ENCODE measurements at regions of chr4 and their contacts with region 1.

Region 1: DNA sequence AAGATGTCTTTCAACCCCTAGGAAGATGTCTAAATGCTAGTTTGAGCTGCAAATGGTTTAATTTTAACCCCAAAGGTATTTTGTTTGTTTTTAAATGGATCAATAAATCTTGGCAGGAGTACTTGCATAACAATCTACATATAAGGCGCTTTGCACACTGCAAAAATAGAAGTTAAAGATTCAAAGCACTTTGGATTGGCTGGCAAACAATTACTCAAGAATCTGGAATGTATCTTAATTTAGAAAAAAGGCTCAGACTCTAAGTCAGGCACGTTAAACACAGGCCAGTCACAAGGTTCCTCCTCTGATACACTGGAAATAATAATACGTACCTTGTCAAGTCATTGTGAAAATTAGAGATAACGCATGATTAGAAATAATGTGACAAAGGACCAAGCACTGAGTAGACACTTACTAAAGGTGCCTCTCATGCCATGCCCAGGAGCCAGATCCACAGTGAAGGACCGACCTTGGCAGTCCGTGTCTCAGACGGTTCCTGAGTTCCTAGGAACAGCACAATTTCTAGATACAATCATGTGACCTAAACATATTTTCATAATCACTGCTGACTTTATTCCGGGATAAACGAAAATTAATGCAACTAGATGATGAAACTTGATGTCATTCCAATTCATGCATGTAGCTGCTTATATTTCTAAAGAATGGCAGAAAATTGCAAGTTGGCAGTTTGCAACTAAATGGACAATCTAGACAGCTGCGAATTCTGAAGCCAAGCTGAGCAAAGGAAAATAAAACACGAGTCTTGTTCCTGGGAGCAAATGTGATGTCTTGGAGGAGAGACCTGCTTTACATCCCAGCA is 49.6 kb downstream of the PROM1 start:
- DNase-seq: no peak
- H3K4me3 ChIP-seq: no peak overlapping the region
- H3K27ac ChIP-seq: no peak overlapping the region
- H3K4me1 ChIP-seq: no peaks in the 10 kb centered on the region
- H3K27me3 ChIP-seq: no peaks in the 10 kb centered on the region
- CTCF ChIP-seq: no peak
- POLR2A ChIP-seq: no peak

Region 2: DNA sequence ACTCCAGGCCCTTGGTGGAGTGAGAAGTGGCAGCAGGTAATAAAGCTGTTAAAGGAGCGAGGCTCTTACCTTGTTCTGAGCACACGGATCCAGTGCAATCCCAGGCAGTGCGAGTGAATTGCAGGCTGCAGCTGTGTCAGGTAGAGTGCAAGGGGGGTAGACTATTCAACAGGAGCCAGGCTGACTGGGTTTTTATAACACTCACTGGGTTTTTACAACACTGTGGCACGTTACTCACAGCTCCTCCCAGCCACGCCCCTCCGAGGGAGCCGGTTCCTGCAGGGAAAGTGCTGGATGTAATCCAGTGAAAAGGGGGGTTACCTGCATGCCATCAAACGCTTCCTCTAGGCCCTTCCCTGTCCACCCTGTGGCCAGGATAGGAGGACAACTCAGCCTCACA is 96.0 kb before region 1 on chr4:
- intact Hi-C with region 1: no loop called
- DNase-seq: no peak
- H3K4me3 ChIP-seq: no peak overlapping the region
- H3K27ac ChIP-seq: no peak overlapping the region
- H3K4me1 ChIP-seq: no peaks in the 10 kb centered on the region
- H3K27me3 ChIP-seq: no peaks in the 10 kb centered on the region
- CTCF ChIP-seq: no peak
- POLR2A ChIP-seq: no peak

Region 3: GRCh38 chr4:16161851-16162408 is 127.7 kb after region 1 on chr4:
- intact Hi-C with region 1: loop called in 1 of 2 experiments (anchors 10 kb)
- DNase-seq: no peak
- H3K4me3 ChIP-seq: no peak overlapping the region
- H3K27ac ChIP-seq: no peak overlapping the region
- H3K4me1 ChIP-seq: peaks cover 0 to 6% of the 10 kb centered on the region in 2 donors
- H3K27me3 ChIP-seq: no peaks in the 10 kb centered on the region
- CTCF ChIP-seq: no peak
- POLR2A ChIP-seq: no peak